ENCODE measurements at regions of chr20 and their contacts with region 1.

Region 1: GRCh38 chr20:43456809-43457639 is 672 bp upstream of the SRSF6 start:
- DNase-seq: peak; percentile 92
- H3K4me3 Mint-ChIP-seq: peak overlapping the region; percentile 81
- H3K27ac Mint-ChIP-seq: peak overlapping the region; percentile 95
- H3K4me1 Mint-ChIP-seq: peaks cover 28% of the 10 kb centered on the region
- H3K27me3 Mint-ChIP-seq: peaks cover 5% of the 10 kb centered on the region

Region 2: GRCh38 chr20:41693136-41693979 is 1763.7 kb before region 1 on chr20:
- CTCF ChIA-PET with region 1: no interaction called
- intact Hi-C with region 1: loop called (anchors 5 kb)
- DNase-seq: peak; percentile 86
- H3K4me3 Mint-ChIP-seq: peak overlapping the region; percentile 85
- H3K27ac Mint-ChIP-seq: peak overlapping the region; percentile 91
- H3K4me1 Mint-ChIP-seq: peaks cover 16% of the 10 kb centered on the region
- H3K27me3 Mint-ChIP-seq: peaks cover 2% of the 10 kb centered on the region

Region 3: DNA sequence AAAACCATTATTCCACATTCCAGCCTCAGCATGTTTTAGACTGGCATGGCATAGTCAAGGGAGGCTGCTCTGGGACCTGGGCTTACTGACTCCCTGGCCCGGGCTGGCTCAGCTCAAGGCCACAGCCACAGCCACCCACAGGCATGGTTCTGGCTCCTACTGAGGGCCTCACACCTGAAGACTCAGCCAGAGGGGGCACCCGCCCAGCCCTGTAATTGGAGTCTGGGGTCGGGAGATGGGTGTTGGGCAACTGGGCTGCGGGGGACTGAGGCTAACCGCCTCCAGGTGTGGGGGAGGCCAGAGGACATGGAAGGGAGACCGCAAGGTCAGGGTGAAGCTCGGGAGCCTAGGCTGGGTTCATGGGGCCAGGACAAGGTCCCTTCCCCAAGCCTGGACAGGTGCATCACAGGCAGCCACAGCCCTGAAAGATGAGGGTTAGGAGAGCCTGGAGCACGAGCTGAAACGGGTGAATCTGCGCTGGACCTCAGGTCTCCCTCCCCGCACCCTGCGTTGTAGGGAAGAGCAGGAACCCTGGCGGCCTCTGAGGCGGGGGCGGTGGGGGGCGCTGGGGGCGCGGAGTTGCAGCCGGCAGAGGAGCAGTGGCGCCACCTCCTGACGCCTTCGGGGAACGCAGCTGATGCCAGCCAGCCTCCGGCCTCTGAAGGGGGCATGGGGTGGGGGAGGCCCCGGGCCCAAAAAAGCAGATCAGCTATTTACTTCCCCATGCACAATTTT is 67.0 kb before region 1 on chr20:
- CTCF ChIA-PET with region 1: no interaction called
- intact Hi-C with region 1: no loop called
- DNase-seq: peak; percentile 11
- H3K4me3 Mint-ChIP-seq: no peak overlapping the region
- H3K27ac Mint-ChIP-seq: no peak overlapping the region
- H3K4me1 Mint-ChIP-seq: no peaks in the 10 kb centered on the region
- H3K27me3 Mint-ChIP-seq: peaks cover 18% of the 10 kb centered on the region

Region 4: DNA sequence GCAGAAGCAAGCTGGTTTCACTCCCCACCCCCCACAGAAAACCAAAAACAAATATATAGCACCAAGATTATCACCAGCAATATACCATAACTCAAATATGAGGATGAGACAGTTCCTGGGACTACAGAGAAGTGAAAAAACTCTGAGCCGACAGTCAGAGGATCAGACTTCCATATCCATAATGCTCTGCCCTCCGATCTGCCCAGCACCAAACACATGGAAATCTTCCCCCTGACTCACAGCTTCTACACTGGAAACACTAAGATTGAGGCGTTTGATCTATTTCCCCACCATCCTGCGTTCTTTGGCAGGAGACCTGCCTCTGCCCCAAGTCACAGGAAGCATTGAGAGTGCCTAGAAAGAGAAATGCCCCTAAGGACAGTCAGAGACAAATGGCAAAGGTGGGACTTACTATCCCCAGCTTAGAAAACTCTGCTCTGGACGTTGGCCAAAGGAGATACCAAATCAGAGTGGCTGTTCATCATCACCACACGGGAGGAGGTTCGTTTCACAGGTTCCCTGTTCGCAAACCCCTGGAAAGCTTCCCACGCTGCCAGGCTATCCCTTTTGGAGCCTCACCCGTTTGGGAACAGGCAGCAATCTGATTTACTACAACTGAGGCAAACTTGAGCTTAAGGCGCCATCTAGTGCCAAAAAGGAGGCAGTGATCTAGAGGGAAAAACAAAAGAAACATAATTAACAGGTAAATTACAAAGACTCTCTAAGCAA is 48.0 kb before region 1 on chr20:
- CTCF ChIA-PET with region 1: no interaction called
- intact Hi-C with region 1: no loop called
- DNase-seq: peak; percentile 35
- H3K4me3 Mint-ChIP-seq: no peak overlapping the region
- H3K27ac Mint-ChIP-seq: no peak overlapping the region
- H3K4me1 Mint-ChIP-seq: no peaks in the 10 kb centered on the region
- H3K27me3 Mint-ChIP-seq: peaks cover 39% of the 10 kb centered on the region

Region 5: GRCh38 chr20:43477193-43477592 is 20.2 kb after region 1 on chr20:
- CTCF ChIA-PET with region 1: no interaction called
- intact Hi-C with region 1: no loop called
- DNase-seq: no peak
- H3K4me3 Mint-ChIP-seq: no peak overlapping the region
- H3K27ac Mint-ChIP-seq: no peak overlapping the region
- H3K4me1 Mint-ChIP-seq: peaks cover 9% of the 10 kb centered on the region
- H3K27me3 Mint-ChIP-seq: no peaks in the 10 kb centered on the region

Region 6: DNA sequence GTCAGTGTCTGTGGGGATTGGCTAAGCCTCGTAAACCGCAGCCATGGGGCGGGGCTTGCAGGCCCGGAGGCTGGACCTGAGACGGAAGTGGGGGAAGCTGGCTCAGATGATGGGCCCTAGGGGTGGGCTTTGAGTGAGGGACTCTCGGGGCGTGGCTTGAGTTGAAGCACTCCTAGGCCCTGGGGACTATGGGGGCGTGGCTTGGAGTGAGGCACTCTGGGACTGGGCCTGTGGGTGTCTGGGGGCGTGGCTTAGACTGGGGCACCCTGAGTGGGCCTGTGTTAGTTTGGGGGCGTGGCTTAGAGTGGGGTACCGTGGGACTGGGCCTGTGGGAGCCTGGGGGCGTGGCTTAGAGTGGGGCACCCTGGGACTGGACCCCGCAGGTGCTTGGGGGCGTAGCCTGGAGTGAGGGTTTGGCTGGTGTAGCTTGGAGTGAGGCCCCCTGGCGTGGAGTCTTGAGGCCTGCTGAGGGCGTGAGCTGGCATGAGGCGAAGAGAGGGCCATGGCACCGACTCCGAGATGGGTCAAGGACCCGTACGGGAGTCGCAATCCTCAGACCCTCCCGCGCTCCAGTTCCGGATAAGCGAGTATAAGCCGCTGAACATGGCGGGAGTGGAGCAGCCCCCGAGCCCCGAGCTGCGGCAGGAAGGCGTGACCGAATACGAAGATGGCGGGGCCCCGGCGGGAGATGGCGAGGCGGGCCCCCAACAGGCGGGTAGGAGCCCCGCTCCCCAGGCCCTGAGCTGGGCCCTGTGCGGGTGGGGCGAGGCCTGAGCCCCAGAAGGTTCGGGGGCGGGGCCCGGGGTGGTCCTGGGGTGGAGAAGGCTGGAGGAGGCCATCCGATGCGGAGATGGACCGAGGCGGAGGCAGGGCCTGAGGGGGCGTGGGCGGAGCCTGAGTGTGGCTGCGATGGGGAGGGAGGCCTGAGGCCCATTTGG is 57.3 kb after region 1 on chr20:
- CTCF ChIA-PET with region 1: no interaction called
- intact Hi-C with region 1: loop called (anchors 1 kb)
- DNase-seq: peak; percentile 95
- H3K4me3 Mint-ChIP-seq: peak overlapping the region; percentile 88
- H3K27ac Mint-ChIP-seq: peak overlapping the region; percentile 81
- H3K4me1 Mint-ChIP-seq: peaks cover 12% of the 10 kb centered on the region
- H3K27me3 Mint-ChIP-seq: peaks cover 3% of the 10 kb centered on the region

Region 7: GRCh38 chr20:43666376-43667328 is 209.6 kb after region 1 on chr20 and contains the start of gene MYBL2:
- CTCF ChIA-PET with region 1: no interaction called
- intact Hi-C with region 1: loop called (anchors 1 kb)
- DNase-seq: peak; percentile 74
- H3K4me3 Mint-ChIP-seq: peak within 1 kb of the TSS; percentile 84
- H3K27ac Mint-ChIP-seq: no peak within 1 kb of the TSS
- H3K4me1 Mint-ChIP-seq: peaks cover 4% of the 10 kb centered on the region
- H3K27me3 Mint-ChIP-seq: peaks cover 9% of the 10 kb centered on the region
- total RNA-seq, gene MYBL2: 102 to 106 TPM

Region 8: GRCh38 chr20:43736588-43737158 is 279.6 kb after region 1 on chr20:
- CTCF ChIA-PET with region 1: no interaction called
- intact Hi-C with region 1: loop called (anchors 5 kb)
- DNase-seq: peak; percentile 68
- H3K4me3 Mint-ChIP-seq: no peak overlapping the region
- H3K27ac Mint-ChIP-seq: no peak overlapping the region
- H3K4me1 Mint-ChIP-seq: peaks cover 35% of the 10 kb centered on the region
- H3K27me3 Mint-ChIP-seq: no peaks in the 10 kb centered on the region

Region 9: DNA sequence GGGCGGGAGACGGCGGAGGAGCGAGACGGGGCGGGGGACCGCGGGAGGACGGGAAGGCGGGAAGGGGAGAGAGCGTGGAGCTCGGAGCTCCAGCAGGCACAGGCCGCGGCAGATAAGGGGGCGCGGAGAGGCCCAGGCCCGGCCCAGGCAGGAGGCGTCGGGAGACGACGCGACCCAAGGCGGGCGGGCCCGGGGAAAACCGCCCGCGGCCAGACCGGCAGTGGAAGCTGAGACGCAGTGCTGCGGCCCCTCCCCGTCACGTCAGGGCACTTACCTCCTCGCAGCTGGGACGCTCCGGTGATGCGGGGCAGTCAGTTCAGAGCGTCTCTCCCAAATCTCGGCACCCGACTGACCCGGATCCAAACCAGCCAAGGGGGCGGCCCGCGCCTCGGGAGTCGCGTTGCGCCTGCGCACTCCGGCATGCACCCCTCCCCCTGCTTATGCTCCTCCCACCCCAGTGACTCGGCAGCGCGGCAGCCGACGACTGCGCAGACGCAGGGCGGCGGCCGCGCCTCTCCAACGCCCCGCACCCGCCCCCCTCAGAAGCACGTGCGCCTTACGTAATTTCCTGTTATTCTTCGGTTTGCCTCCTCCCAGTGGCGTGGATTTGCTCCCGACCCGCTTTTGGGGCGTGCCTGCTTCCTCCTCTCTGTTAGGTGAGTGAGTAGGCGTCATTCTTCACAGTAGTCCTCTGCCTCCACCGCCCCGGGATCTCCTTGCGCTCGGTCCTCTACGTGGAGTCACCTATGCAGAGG is 753.6 kb after region 1 on chr20 and contains the start of gene OSER1:
- CTCF ChIA-PET with region 1: no interaction called
- intact Hi-C with region 1: loop called (anchors 2 kb)
- DNase-seq: peak; percentile 99
- H3K4me3 Mint-ChIP-seq: peak within 1 kb of the TSS; percentile 94
- H3K27ac Mint-ChIP-seq: peak within 1 kb of the TSS; percentile 92
- H3K4me1 Mint-ChIP-seq: peaks cover 61% of the 10 kb centered on the region
- H3K27me3 Mint-ChIP-seq: no peaks in the 10 kb centered on the region
- total RNA-seq, gene OSER1: 27.7 to 28.4 TPM